Caco-2 (cell line): ENCODE measurements at regions of chr6 and their contacts with region 1.

Region 1: GRCh38 chr6:26172496-26172958 is 85.3 kb downstream of the HFE start:
- DNase-seq: no peak
- H3K4me3 ChIP-seq: peak overlapping the region; percentile 53
- H3K4me3 Mint-ChIP-seq: peak overlapping the region; percentile 68
- H3K27ac Mint-ChIP-seq: peak overlapping the region; percentile 37
- H3K4me1 ChIP-seq: peaks cover 6% of the 10 kb centered on the region
- H3K4me1 Mint-ChIP-seq: peaks cover 10% of the 10 kb centered on the region
- H3K27me3 ChIP-seq: no peaks in the 10 kb centered on the region
- H3K27me3 Mint-ChIP-seq: no peaks in the 10 kb centered on the region
- CTCF ChIP-seq: no peak

Region 2: DNA sequence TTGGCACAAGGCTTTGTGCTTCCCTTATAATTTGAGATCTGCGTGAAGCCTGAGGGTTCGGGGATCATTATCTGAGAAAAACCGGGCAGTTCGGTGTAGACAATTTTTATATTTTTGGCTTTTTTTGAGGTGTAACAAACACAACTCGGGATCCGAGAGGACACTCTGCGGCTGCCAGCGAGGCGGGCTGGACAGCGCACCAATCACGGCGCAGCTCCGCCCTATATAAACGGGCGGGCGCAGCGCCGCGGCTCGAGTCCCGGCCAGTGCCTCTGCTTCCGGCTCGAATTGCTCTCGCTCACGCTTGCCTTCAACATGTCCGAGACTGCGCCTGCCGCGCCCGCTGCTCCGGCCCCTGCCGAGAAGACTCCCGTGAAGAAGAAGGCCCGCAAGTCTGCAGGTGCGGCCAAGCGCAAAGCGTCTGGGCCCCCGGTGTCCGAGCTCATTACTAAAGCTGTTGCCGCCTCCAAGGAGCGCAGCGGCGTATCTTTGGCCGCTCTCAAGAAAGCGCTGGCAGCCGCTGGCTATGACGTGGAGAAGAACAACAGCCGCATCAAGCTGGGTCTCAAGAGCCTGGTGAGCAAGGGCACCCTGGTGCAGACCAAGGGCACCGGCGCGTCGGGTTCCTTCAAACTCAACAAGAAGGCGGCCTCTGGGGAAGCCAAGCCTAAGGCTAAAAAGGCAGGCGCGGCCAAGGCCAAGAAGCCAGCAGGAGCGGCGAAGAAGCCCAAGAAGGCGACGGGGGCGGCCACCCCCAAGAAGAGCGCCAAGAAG is 16.3 kb before region 1 on chr6:
- CTCF ChIA-PET with region 1: no interaction called
- POLR2A ChIA-PET with region 1: interaction called, 18 read pairs
- intact Hi-C with region 1: loop called (anchors 1 kb)
- DNase-seq: peak; percentile 86 to 93
- H3K4me3 ChIP-seq: peak overlapping the region; percentile 64
- H3K4me3 Mint-ChIP-seq: peak overlapping the region; percentile 86
- H3K27ac Mint-ChIP-seq: peak overlapping the region; percentile 98
- H3K4me1 ChIP-seq: peaks cover 10% of the 10 kb centered on the region
- H3K4me1 Mint-ChIP-seq: peaks cover 45% of the 10 kb centered on the region
- H3K27me3 ChIP-seq: no peaks in the 10 kb centered on the region
- H3K27me3 Mint-ChIP-seq: peaks cover 15% of the 10 kb centered on the region
- CTCF ChIP-seq: no peak